ENCODE measurements at regions of chr20 and their contacts with region 1.

Region 1: DNA sequence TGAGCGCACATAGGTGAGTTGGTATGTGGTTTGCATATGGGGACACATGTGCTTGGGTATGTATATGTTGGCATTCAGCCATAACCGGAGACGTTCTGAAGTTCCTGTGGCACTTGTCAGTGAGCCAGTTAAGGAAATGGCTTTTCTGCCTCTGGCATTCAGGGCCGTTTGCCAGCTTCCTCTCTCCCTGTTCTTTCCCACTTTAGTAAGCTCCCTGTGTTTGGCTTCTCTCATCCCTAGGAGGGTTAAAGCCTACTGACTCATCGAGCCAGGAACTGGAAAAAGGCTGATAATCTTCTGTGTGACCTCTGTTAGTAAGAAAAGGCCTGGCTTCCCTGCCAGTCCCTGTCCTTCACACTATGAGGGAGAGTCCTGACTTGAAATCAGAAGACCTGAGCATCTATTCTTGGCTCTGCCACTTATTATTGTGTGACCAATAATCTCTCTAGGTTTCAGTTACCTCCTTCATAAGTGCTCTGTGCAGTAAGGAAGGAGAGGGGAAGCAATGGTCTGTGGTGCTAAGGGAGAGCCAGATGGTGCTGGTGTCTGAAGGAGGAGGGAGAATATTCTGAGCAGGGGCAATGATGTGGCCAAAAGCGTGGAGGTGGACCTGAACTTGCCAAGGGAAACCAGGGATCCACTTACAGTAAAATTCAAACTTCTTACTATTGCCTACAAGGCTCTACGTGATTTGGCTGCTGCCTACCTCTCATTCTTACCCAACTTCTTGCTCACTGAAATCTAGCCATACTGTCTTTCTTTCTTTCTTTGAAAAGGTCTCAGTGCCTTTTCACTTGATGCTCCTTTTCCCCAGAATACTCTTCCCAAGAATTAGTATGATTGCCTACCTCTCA is 31.4 kb downstream of the ACSS2 start:
- DNase-seq: peak; percentile 86 to 97
- H3K4me3 ChIP-seq: 0 out of 2 replicates have a peak overlapping the region, but pooled peaks have one; percentile 3
- H3K27ac ChIP-seq: peak overlapping the region; percentile 90
- H3K4me1 ChIP-seq: peaks cover 40% of the 10 kb centered on the region
- H3K27me3 ChIP-seq: no peaks in the 10 kb centered on the region
- CTCF ChIP-seq: no peak

Region 2: GRCh38 chr20:34886122-34886521 is 21.7 kb before region 1 on chr20:
- CTCF ChIA-PET with region 1: interaction called, 19 read pairs
- POLR2A ChIA-PET with region 1: no interaction called
- intact Hi-C with region 1: no loop called
- DNase-seq: no peak
- H3K4me3 ChIP-seq: no peak overlapping the region
- H3K27ac ChIP-seq: no peak overlapping the region
- H3K4me1 ChIP-seq: peaks cover 18% of the 10 kb centered on the region
- H3K27me3 ChIP-seq: no peaks in the 10 kb centered on the region
- CTCF ChIP-seq: no peak

Region 3: DNA sequence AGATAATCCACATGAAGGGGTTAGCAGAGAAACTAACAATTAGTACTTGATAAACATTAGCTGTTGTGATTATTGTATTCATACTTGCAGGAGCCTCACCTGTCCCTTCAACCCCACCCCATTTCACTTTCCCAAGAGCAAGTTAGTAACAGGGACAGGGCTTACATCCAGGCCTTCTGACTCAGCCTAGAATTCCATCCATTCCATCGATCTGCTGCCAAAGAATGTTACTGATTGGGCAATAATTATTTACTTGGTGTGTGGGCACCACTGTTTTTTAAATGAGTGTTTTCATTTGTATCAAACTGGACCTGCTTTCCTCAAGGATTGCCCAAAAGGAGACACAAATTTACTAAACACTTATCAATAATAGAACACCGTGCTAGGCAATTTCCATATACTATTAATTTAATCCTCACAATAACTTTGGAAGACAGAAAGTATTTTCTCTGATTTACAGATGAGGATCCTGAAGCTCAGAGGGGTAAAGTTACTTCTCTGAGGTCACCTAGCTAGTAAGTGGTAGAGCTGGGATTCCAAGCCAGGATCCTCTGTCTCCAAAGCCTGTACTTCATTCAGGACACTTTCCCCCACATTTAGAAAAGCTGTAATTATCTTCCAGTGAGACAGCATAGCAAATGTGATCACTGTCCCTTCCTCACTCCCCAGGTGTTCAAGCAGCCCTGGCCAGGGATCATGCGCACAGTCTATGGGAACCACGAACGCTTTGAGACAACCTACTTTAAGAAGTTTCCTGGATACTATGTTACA is 15.0 kb after region 1 on chr20:
- CTCF ChIA-PET with region 1: no interaction called
- POLR2A ChIA-PET with region 1: interaction called, 3 read pairs
- intact Hi-C with region 1: loop called (anchors 2 kb)
- DNase-seq: peak; percentile 65 to 96
- H3K4me3 ChIP-seq: peak overlapping the region; percentile 19; the same call in 1 of the 2 replicates
- H3K27ac ChIP-seq: peak overlapping the region; percentile 89
- H3K4me1 ChIP-seq: peaks cover 76% of the 10 kb centered on the region
- H3K27me3 ChIP-seq: no peaks in the 10 kb centered on the region
- CTCF ChIP-seq: no peak

Region 4: DNA sequence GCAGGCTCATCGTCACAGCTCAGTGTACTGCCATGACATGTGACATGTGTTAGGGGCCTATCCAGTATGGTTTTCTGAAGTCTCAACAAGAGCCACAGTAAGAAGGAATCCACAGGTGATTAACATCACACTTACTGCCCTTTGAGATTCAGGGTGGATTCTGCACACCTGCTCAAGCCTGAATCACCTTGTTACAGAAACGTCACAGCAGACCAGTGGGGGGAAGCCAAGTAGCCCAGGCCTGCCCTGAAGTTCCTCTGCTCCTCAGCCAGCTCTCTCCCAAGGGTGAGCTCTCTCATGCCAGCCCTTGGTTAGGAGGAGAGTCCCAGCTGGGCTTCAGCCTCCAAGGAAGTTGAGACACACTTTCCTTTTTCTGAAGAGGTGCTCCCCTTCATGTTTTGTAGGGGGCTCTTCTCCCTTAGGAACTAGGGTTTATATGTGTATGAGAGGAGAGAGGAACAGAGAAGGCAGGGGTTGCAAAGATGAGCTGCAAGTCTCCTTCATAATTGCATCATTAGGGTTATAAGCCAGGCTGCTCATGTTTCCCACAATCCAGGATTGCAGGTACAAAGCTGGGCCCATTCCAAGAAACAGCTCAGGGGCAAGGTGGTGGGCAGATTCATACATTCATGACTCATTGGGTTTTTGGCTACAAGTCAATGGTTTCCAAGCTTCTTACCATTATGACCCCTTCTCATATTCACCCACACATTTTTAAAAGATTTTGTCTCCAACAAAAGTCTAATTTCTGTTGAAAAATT is 36.1 kb after region 1 on chr20:
- CTCF ChIA-PET with region 1: interaction called, 11 read pairs
- POLR2A ChIA-PET with region 1: interaction called, 3 read pairs
- intact Hi-C with region 1: no loop called
- DNase-seq: peak; percentile 67 to 87
- H3K4me3 ChIP-seq: no peak overlapping the region; the same call in 1 of the 2 replicates
- H3K27ac ChIP-seq: peak overlapping the region; percentile 97
- H3K4me1 ChIP-seq: peaks cover 63% of the 10 kb centered on the region
- H3K27me3 ChIP-seq: no peaks in the 10 kb centered on the region
- CTCF ChIP-seq: no peak

Region 5: DNA sequence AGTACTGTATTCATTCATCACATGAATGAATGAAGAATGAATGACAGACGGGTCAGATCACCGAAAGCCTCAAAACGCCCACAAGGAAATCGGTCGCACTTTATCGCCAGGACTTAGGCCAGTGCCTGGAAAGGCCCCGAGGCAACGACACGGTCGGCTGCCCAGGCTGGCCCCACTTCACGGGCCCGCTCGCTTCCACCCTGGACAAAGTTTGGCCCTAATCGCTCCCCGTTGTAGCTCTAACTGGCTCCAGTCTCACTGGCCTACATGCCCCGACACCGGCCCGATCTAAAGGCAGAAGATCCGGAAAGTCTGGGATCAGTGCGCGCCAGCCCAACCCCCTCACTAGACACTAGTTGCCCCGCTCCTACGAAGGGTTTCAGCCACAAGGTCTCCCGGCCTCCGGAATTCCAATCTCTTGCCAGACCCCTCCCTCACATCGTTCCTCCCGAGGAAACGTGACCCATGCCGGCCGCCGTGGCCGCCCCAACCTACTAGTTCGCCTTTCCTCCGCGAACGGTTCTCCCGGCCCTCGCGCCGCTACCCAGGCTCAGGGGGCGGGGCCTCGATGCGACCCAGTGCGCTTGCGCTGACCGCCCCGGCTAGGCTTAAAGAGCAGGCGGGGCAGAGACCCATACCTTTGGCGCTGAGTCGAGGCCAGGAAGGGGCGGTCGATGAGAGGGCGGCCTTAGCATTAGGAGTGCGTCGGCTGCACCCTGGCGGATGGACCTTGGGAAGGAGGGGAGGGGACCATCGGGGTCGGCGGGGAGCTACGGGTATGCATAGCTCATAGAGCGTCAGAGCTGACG is 47.6 kb after region 1 on chr20 and contains the starts of genes GSS and MYH7B:
- CTCF ChIA-PET with region 1: no interaction called
- POLR2A ChIA-PET with region 1: interaction called, 5 read pairs
- intact Hi-C with region 1: loop called (anchors 1 kb)
- DNase-seq: peak; percentile 89 to 99
- H3K4me3 ChIP-seq: peak within 1 kb of the TSS; percentile 69
- H3K27ac ChIP-seq: peak within 1 kb of the TSS; percentile 87
- H3K4me1 ChIP-seq: peaks cover 40% of the 10 kb centered on the region
- H3K27me3 ChIP-seq: no peaks in the 10 kb centered on the region
- CTCF ChIP-seq: peak; percentile 61
- total RNA-seq, gene GSS: 131 and 138 TPM in 2 replicates
- total RNA-seq, gene MYH7B: 1.0 and 2.3 TPM in 2 replicates

Region 6: DNA sequence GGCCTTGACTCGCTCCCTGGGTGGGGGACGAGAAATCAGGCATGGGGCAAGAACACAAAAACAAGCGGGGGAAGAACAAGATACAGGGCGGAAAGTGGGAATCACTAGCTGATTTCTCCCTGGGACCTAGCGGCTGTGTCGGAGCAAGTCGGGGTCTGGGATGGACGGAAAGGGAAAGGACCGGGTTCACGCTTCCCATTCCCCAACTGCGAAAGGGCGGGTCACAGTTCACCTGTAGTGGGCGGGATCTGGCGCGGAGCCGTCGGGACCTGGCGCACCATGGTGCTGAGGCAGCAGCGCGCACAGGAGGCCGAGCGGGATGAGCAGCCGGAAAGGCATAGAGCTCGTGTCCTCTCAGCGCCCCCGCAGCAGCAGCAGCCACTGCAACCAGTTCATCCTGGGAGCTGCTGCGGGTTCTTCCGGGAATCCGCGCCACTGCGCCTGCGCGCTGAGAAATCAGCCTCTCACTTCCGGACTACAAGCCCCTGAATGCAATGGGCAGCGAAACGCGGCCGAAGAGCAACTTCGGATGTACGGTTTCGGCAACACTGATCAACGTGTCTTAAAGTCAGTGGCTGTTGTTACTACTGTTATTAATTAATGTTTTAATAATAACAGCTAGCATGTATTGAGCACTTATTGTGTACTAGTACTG is 239.2 kb after region 1 on chr20 and contains the start of gene EDEM2:
- CTCF ChIA-PET with region 1: no interaction called
- POLR2A ChIA-PET with region 1: interaction called, 14 read pairs
- intact Hi-C with region 1: no loop called
- DNase-seq: peak; percentile 89 to 96
- H3K4me3 ChIP-seq: peak within 1 kb of the TSS; percentile 93
- H3K27ac ChIP-seq: peak within 1 kb of the TSS; percentile 94
- H3K4me1 ChIP-seq: peaks cover 14% of the 10 kb centered on the region
- H3K27me3 ChIP-seq: no peaks in the 10 kb centered on the region
- CTCF ChIP-seq: no peak
- total RNA-seq, gene EDEM2: 28.6 and 34.9 TPM in 2 replicates

Region 7: GRCh38 chr20:35575970-35576623 is 668.3 kb after region 1 on chr20:
- CTCF ChIA-PET with region 1: no interaction called
- POLR2A ChIA-PET with region 1: interaction called, 22 read pairs
- intact Hi-C with region 1: no loop called
- DNase-seq: peak; percentile 88 to 95
- H3K4me3 ChIP-seq: peak overlapping the region; percentile 32; the same call in 1 of the 2 replicates
- H3K27ac ChIP-seq: peak overlapping the region; percentile 91
- H3K4me1 ChIP-seq: peaks cover 44% of the 10 kb centered on the region
- H3K27me3 ChIP-seq: no peaks in the 10 kb centered on the region
- CTCF ChIP-seq: no peak

Measured in PC-9 (cell line).